ENCODE measurements at regions of chr5 and their contacts with region 1.

Region 1: GRCh38 chr5:110431603-110432002 is 294.9 kb downstream of the TMEM232 start:
- DNase-seq: no peak
- H3K4me3 ChIP-seq: no peak overlapping the region
- H3K27ac ChIP-seq: no peak overlapping the region
- H3K4me1 ChIP-seq: no peaks in the 10 kb centered on the region
- H3K27me3 ChIP-seq: no peaks in the 10 kb centered on the region
- CTCF ChIP-seq: no peak

Region 2: DNA sequence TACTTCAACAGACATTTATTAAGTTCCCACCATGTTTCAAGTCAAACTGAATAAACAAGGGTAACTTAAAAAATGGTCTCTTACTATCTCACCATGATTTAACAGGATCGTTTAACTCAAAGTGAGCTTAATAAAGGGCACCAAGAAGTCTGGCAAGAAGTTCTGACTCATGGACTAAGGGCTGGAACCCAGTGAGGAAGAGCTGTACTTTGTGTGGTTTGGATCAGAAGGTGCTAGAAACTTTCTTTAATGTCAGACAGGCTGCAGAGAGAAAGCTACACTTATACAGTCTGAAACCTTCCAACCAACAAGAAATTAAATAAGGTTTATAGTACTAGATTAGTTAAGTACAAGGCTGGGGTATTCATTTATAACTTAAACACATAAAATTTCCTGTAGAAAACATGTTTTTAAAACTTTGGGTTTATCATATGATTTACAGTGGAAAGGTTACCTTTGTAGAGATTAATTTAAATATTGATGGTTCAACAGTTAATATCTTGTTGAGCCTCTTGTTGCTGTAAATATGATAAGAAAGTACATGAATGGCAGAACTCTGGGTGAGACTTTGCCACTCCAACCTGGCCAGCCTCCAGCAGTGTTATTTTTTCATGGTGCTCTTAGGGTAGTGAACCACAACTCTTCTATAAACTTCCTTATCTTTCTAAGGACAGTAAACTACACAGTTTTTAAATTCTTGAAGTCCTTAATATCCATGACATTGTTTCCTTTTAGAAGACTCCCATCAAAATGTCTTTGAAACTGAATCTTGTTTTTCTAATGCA is 579.0 kb before region 1 on chr5:
- CTCF ChIA-PET with region 1: no interaction called
- POLR2A ChIA-PET with region 1: no interaction called
- intact Hi-C with region 1: no loop called
- DNase-seq: no peak
- H3K4me3 ChIP-seq: no peak overlapping the region
- H3K27ac ChIP-seq: no peak overlapping the region
- H3K4me1 ChIP-seq: no peaks in the 10 kb centered on the region
- H3K27me3 ChIP-seq: no peaks in the 10 kb centered on the region
- CTCF ChIP-seq: no peak

Region 3: DNA sequence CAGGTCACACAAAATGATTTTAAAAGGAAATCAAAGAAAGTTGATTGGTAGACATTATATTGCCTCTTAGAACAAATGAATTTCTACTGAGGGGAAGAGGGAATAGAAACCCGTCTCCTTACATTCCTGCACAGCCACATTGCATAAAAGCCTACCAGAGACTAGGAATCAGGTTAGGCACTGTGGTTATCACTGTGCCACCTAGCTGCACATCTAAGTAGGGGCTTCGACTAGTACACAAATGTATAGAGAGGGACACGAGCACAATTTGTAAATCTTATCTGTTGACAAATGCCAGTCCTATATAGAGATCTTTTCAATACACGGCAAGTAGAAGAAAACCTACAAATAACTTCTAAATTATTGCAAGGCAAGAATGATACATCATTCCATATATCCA is 15.6 kb after region 1 on chr5:
- CTCF ChIA-PET with region 1: no interaction called
- POLR2A ChIA-PET with region 1: no interaction called
- intact Hi-C with region 1: loop called (anchors 2 kb)
- DNase-seq: no peak
- H3K4me3 ChIP-seq: no peak overlapping the region
- H3K27ac ChIP-seq: no peak overlapping the region
- H3K4me1 ChIP-seq: no peaks in the 10 kb centered on the region
- H3K27me3 ChIP-seq: no peaks in the 10 kb centered on the region
- CTCF ChIP-seq: no peak

Region 4: GRCh38 chr5:110612778-110613396 is 181.3 kb after region 1 on chr5:
- CTCF ChIA-PET with region 1: no interaction called
- POLR2A ChIA-PET with region 1: no interaction called
- intact Hi-C with region 1: no loop called
- DNase-seq: no peak
- H3K4me3 ChIP-seq: no peak overlapping the region
- H3K27ac ChIP-seq: no peak overlapping the region
- H3K4me1 ChIP-seq: no peaks in the 10 kb centered on the region
- H3K27me3 ChIP-seq: no peaks in the 10 kb centered on the region
- CTCF ChIP-seq: no peak

Measured in PC-9 (cell line).